Left colon (tissue), 2 donors: ENCODE measurements at regions of chr13 and their contacts with region 1.

Region 1: GRCh38 chr13:49690992-49691886 is at the start of gene EBPL:
- DNase-seq: peak; percentile 95 to 96
- ATAC-seq: peak; percentile 92
- total RNA-seq, gene EBPL: 34.8 to 45.8 TPM

Region 2: GRCh38 chr13:49784886-49785570 is 93.8 kb after region 1 on chr13:
- intact Hi-C with region 1: loop called in 1 of 2 experiments (anchors 10 kb)
- DNase-seq: no peak
- ATAC-seq: no peak